ENCODE measurements at regions of chr10 and their contacts with region 1.

Region 1: DNA sequence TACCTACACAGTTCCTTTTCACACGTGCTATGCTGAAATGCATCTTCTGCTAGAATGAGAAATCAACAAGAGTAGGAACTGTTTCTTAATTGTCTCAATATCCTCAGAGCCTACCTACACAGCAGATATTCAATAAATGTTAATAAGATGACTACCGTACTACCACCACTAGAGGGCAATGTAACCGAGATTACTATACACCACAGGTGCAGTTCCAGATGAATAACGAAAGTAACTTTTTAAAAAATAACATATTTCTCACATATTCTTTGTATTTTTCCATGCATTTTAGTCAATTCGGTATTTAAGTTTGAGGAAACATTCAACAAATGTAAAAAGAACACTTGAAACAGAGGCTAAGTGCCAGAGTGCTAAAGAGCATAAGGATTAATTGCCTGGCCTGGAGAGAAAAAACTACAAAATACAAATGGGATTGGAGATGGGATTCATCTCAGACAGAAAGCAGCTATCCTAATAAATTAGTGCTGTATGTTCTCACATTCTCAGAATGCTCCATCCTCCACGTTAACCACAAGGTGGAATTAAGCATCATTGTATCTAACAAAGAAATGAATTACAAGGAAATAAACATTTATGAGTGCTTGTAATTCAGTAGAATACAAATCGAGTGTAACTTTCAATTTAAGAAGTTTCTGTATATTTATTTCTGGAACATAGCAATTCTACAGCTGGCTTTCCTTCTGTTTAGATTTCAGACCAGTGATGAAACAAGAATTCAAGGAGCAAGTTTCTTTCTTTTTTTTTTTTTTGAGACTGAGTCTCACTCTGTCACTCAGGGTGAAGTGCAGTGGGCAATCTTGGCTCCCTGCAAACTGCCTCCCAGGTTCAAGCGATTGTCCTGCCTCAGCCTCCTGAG is 20.3 kb upstream of the HECTD2 start:
- DNase-seq: peak; percentile 71
- ATAC-seq: peak; percentile 79
- H3K4me3 ChIP-seq: peak overlapping the region; percentile 37; the same call in 1 of the 2 replicates
- H3K27ac ChIP-seq: peak overlapping the region; percentile 37; the same call in 1 of the 2 replicates
- H3K4me1 ChIP-seq: peaks cover 3% of the 10 kb centered on the region; the same call in 1 of the 2 replicates
- H3K27me3 ChIP-seq: peaks cover 21% of the 10 kb centered on the region
- CTCF ChIP-seq: peak; percentile 64
- POLR2A ChIP-seq: no peak
- RAD21 ChIP-seq: peak; percentile 65

Region 2: DNA sequence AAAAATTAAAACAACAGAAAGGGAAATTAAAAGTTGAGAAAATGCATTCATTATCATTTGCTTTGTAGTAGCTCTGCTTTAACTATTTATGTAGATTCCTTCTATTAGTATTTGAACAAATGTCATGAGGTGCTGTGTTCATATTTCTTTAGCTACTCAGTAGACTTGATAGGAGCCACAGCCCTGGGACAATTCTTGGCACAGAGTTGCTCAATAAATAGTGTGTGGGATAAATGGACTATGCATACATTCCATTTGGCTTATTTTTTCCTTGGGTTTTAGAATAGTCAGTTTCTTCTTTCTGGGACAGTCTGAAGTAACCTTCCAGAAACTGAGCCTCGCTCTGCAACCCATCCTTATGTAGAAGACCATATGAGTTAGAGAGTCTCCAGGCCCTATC is 504.7 kb before region 1 on chr10:
- CTCF ChIA-PET with region 1: no interaction called
- POLR2A ChIA-PET with region 1: no interaction called
- dilution Hi-C with region 1: no loop called
- in situ Hi-C with region 1: no loop called
- intact Hi-C with region 1: loop called (anchors 10 kb)
- DNase-seq: peak; percentile 85
- ATAC-seq: peak; percentile 86
- H3K4me3 ChIP-seq: no peak overlapping the region
- H3K27ac ChIP-seq: peak overlapping the region; percentile 36
- H3K4me1 ChIP-seq: peaks cover 17% of the 10 kb centered on the region
- H3K27me3 ChIP-seq: no peaks in the 10 kb centered on the region
- CTCF ChIP-seq: no peak
- POLR2A ChIP-seq: no peak
- RAD21 ChIP-seq: no peak

Region 3: DNA sequence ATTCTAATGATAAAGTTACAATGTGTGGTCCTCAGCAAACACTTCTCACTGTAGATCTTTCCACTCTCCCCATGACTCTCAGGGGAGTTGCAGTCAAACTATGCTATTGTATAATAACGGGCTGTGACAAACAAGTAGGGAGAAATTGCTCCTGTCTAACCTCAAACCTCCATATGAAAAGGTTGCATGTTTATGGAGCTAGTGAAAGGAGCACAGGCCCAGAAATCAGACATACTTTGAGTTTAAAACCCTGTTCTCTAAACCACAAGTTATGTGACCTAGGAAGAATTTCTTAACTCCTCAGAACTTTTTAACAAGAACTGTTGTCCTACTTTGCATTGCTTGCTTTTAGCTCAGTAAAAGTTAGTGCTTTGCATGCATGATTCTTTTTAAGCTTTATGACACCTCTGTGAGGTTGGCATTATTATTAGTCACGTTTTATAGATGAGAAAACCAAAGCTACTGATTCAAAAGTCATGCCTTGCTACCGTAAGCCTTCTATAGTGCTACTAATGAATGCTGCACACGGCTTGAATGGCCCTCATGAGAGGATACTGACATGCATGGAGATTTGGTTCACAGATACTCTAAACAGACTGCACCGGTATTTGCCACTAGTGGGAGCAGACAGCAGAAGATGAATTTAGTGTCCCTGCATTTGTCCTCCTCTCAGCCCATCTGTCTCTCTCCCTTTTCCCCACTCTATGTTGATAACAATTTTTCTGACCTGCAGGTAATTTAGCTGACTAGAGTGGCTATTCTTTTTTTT is 298.9 kb before region 1 on chr10:
- CTCF ChIA-PET with region 1: no interaction called
- POLR2A ChIA-PET with region 1: no interaction called
- dilution Hi-C with region 1: no loop called
- in situ Hi-C with region 1: no loop called
- intact Hi-C with region 1: no loop called
- DNase-seq: no peak
- ATAC-seq: no peak
- H3K4me3 ChIP-seq: no peak overlapping the region
- H3K27ac ChIP-seq: no peak overlapping the region
- H3K4me1 ChIP-seq: 0 out of 2 replicates have a peak, but pooled peaks cover 3% of the 10 kb centered on the region
- H3K27me3 ChIP-seq: no peaks in the 10 kb centered on the region; the same call in none of the 2 replicates
- CTCF ChIP-seq: 0 out of 2 replicates have a peak, but pooled peaks have one; percentile 8
- POLR2A ChIP-seq: no peak
- RAD21 ChIP-seq: no peak

Region 4: DNA sequence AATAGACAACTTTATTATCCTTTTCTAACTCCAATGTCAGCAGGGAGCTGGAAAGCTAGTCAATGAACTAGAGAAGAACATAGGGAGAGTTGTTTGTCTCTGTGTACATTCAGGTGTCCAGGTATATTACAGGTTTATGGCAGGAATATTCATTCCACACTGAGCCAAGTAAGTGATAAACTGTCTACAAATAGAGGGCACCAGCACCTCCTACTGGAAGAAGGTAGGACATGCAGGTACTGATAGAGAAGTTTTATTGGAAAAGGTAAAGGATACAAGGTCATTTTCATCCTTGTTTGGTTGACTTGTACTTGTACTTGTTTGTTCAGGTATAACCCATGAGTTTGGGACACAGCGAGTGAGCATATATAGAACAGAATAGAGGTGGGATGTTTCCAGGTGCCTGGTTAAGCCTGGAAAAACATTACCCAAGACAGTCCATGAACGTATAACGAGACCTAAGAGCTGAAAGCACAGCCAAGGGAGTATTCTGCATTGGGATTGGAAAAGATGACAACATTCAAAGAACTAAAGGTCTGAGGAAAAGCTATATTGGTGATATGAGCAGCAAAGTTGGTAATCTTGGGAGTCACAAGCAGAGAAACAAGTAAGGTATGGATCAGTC is 304.4 kb after region 1 on chr10:
- CTCF ChIA-PET with region 1: no interaction called
- POLR2A ChIA-PET with region 1: no interaction called
- dilution Hi-C with region 1: no loop called
- in situ Hi-C with region 1: no loop called
- intact Hi-C with region 1: loop called (anchors 5 kb)
- DNase-seq: peak; percentile 51
- ATAC-seq: peak; percentile 81
- H3K4me3 ChIP-seq: no peak overlapping the region
- H3K27ac ChIP-seq: no peak overlapping the region
- H3K4me1 ChIP-seq: peaks cover 8% of the 10 kb centered on the region
- H3K27me3 ChIP-seq: no peaks in the 10 kb centered on the region
- CTCF ChIP-seq: peak; percentile 82
- POLR2A ChIP-seq: no peak
- RAD21 ChIP-seq: peak; percentile 86